ENCODE measurements at regions of chr3 and their contacts with region 1.

Region 1: GRCh38 chr3:176927706-176928581 is 269.3 kb downstream of the TBL1XR1 start:
- DNase-seq: no peak
- CTCF ChIP-seq: no peak

Region 2: DNA sequence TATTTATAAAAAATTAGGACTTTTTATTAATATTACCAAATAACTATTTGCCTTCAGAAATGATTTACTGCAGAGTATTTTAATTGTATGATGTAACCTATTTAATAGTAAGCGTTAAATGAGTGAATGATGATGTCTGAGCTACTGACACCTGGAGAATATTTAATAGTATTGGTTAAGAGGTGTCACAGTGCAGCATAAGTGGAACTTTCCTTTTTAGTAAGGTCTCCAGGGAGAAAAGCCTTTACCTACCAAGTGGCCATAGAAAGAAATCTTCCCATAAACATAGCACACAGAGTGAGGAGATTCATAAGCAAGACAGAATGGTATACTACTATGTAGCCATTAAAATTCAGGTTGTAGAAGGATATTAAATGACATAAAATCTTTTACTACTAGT is 172.4 kb before region 1 on chr3:
- CTCF ChIA-PET with region 1: no interaction called
- POLR2A ChIA-PET with region 1: no interaction called
- DNase-seq: no peak
- CTCF ChIP-seq: no peak

Region 3: DNA sequence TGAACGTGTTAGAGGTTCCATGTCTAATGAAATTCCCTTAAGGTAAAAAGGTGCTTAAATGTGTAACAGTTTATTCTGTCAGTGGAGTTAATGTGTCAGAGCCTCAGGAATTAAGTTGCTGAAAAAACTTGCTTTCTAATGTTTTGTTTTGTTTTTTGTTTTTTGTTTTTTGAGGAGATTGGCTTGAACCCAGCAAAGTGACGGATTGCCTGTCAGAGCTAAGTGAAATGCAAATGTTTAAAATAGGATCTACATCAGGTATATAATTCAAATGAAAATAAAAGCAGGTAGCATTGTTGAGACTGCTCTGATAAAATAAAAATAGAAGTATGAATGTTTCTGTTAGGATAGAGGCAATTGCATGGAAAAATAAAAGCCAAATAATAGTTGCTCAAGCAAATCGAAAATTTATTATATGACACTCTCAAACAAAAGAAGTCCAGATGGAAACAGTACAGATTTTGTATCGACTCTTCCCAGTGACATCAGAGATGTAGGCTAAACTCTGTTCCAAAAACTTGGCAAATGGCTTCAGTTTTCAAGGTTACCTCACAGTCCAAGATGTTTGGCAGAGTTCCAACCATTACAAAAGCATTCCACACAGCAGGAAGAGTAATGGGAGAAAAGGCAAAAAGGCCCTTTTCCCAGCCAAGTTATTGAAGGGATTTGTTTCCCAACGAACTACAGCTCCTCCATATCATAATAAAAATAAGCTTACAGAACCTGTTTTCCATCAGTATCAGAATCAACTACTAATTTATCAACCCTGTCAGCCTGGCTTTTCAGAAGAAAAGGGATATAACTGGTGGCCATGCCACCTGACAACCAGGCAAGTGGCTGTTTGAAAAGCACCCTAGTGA is 21.7 kb before region 1 on chr3:
- CTCF ChIA-PET with region 1: no interaction called
- POLR2A ChIA-PET with region 1: no interaction called
- DNase-seq: no peak
- CTCF ChIP-seq: no peak

Region 4: GRCh38 chr3:176939022-176939817 is 11.3 kb after region 1 on chr3:
- CTCF ChIA-PET with region 1: interaction called, 15 read pairs
- POLR2A ChIA-PET with region 1: no interaction called
- DNase-seq: peak; percentile 65
- CTCF ChIP-seq: peak; percentile 80

Region 5: DNA sequence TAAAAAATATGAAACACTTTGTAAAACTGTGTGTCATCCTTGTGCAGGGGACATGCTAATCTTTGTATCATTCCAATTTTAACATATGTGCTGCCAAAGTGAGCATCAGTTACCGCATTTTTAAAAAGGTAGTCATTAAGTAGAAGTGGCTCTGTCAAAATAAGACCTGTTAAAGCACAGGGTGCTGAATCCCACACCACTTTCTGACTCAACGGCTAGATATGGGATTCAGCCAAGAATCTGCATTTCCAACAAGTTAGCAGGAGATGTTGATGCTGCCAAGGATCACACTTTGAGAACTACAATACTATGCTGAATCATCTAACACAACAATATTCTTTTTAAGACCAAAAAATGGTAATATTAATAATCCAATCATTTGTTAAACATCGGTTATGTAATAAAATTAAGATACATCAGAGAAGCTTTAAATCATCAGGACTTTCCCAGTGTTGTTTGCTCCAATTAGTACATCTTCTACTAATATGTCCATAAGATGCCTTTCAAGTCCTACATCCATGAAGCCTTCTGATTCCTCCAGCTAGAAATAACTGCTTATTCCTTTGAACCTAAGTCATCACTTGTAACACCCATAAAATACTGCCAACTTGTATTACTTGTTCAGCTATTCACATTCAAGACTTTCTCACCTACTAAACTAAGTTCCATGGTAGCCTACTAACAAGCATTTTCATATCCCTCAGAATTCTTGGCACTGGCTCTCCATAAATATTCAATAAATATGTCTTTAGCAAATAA is 198.2 kb after region 1 on chr3:
- CTCF ChIA-PET with region 1: no interaction called
- POLR2A ChIA-PET with region 1: no interaction called
- DNase-seq: no peak
- CTCF ChIP-seq: no peak

Measured in GM10248 (cell line).